HAP-1 (cell line): ENCODE measurements at regions of chr9 and their contacts with region 1.

Region 1: GRCh38 chr9:101093620-101094019 is 65.1 kb downstream of the PLPPR1 start:
- DNase-seq: no peak
- H3K4me3 ChIP-seq: no peak overlapping the region
- H3K4me1 ChIP-seq: no peaks in the 10 kb centered on the region
- H3K27me3 ChIP-seq: no peaks in the 10 kb centered on the region

Region 2: DNA sequence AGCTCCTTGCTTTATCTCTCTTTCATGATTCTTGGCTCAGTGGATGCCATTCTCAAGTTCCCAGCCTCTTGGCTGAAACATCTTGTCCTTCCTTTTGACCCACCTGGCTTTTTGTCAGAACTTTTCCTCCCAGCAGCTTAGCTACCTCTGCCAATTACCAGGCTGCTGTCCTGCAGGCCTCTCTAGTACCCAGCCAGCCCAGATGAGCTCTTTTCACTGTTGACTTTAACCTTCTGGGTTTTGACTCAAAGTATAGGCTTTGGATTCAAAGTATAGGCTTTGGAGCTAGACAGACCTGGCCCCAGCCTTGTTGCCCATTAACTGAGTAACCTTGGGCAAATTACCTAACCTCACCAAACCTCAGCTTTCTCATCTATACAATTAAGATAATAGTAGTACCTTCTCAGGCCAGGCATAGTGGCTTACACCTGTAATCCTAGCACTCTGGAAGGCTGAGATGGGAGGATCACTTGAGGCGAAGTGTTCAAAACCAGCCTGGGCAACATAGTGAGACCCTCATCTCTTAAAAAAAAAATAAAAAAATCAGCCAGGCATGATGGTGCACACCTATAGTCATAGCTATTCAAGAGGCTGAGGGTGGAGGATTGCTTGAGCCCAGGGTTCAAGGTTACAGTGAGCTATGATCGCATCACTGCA is 627.3 kb before region 1 on chr9:
- in situ Hi-C with region 1: no loop called
- DNase-seq: no peak
- H3K4me3 ChIP-seq: no peak overlapping the region
- H3K4me1 ChIP-seq: peaks cover 7% of the 10 kb centered on the region
- H3K27me3 ChIP-seq: no peaks in the 10 kb centered on the region

Region 3: GRCh38 chr9:100819980-100820379 is 273.6 kb before region 1 on chr9:
- in situ Hi-C with region 1: no loop called
- DNase-seq: no peak
- H3K4me3 ChIP-seq: no peak overlapping the region
- H3K4me1 ChIP-seq: no peaks in the 10 kb centered on the region
- H3K27me3 ChIP-seq: no peaks in the 10 kb centered on the region

Region 4: GRCh38 chr9:101158361-101158760 is 64.7 kb after region 1 on chr9:
- in situ Hi-C with region 1: loop called (anchors 10 kb)
- DNase-seq: no peak
- H3K4me3 ChIP-seq: no peak overlapping the region
- H3K4me1 ChIP-seq: no peaks in the 10 kb centered on the region
- H3K27me3 ChIP-seq: no peaks in the 10 kb centered on the region